Ovary (tissue), 10 donors: ENCODE measurements at regions of chr11 and their contacts with region 1.

Region 1: DNA sequence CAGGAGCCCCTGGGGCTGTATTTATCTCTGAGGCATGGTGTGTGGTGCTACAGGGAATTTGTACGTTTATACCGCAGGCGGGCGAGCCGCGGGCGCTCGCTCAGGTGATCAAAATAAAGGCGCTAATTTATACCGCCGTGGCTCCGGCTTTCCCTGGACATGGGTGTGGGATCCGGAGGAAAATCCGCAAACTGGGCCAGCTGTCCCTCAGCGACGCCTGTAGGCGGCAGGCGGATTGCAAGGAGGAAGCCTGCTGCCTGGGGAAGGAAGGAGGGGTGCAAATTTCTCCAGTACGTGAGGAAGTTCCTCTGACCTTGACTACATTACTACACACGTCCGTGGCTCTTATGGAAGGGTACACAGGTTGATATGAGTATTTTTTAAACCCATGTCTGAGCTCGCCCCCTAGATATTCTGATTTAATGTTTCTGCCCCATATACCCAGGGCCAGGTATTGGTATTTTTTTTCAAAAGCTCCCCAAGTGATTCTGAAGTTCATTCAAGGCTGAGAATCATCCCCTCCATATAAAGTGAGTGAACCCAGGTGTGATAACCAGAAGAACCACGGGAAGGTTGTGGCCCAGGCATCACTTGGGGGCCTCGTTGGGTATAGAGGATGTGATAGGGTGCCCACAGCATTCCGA is 2.8 kb downstream of the MYOD1 start:
- DNase-seq: no peak
- H3K4me3 ChIP-seq: no peak overlapping the region
- H3K27ac ChIP-seq: no peak overlapping the region
- H3K4me1 ChIP-seq: no peaks in the 10 kb centered on the region
- H3K27me3 ChIP-seq: no peaks in the 10 kb centered on the region
- CTCF ChIP-seq: no peak
- EP300 ChIP-seq: no peak
- POLR2A ChIP-seq: no peak

Region 2: DNA sequence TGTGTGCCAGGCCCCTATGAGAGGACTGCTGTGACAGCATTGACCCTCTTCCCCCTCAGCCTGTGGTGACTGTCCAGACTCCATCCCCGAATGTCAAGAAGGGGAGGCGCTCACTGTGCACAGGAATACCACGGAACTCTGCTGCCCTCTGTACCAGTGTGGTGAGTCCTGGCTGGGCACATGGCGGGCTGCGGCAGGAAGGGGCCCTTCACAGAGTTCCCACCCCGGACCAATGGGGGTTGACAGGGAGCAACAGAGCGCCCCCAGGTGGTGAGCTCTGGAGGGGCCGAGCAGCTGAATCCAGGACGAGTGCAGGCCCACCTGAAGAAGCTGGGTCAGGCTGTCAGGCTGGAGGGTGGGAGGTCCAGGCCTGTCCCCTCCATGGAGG is 86.6 kb before region 1 on chr11:
- intact Hi-C with region 1: no loop called
- DNase-seq: no peak
- H3K4me3 ChIP-seq: no peak overlapping the region
- H3K27ac ChIP-seq: no peak overlapping the region
- H3K4me1 ChIP-seq: no peaks in the 10 kb centered on the region
- H3K27me3 ChIP-seq: no peaks in the 10 kb centered on the region
- CTCF ChIP-seq: no peak
- EP300 ChIP-seq: no peak
- POLR2A ChIP-seq: no peak

Region 3: GRCh38 chr11:17673951-17674350 is 48.2 kb before region 1 on chr11:
- intact Hi-C with region 1: loop called in 1 of 4 experiments (anchors 5 kb)
- DNase-seq: no peak
- H3K4me3 ChIP-seq: no peak overlapping the region
- H3K27ac ChIP-seq: no peak overlapping the region
- H3K4me1 ChIP-seq: no peaks in the 10 kb centered on the region
- H3K27me3 ChIP-seq: no peaks in the 10 kb centered on the region
- CTCF ChIP-seq: no peak
- EP300 ChIP-seq: no peak
- POLR2A ChIP-seq: no peak

Region 4: GRCh38 chr11:17765356-17766072 is 43.4 kb after region 1 on chr11:
- intact Hi-C with region 1: loop called in 1 of 4 experiments (anchors 5 kb)
- DNase-seq: no peak
- H3K4me3 ChIP-seq: no peak overlapping the region
- H3K27ac ChIP-seq: no peak overlapping the region
- H3K4me1 ChIP-seq: no peaks in the 10 kb centered on the region
- H3K27me3 ChIP-seq: no peaks in the 10 kb centered on the region
- CTCF ChIP-seq: no peak
- EP300 ChIP-seq: no peak
- POLR2A ChIP-seq: no peak

Region 5: GRCh38 chr11:17781221-17781620 is 59.1 kb after region 1 on chr11:
- intact Hi-C with region 1: no loop called
- DNase-seq: peak in 1 of 5 donors; percentile 5
- H3K4me3 ChIP-seq: no peak overlapping the region
- H3K27ac ChIP-seq: no peak overlapping the region
- H3K4me1 ChIP-seq: no peaks in the 10 kb centered on the region
- H3K27me3 ChIP-seq: no peaks in the 10 kb centered on the region
- CTCF ChIP-seq: no peak
- EP300 ChIP-seq: no peak
- POLR2A ChIP-seq: no peak